ENCODE measurements at regions of chr3 and their contacts with region 1.

Region 1: GRCh38 chr3:145776782-145777408 is 384.1 kb downstream of the PLOD2 start:
- DNase-seq: peak; percentile 54
- ATAC-seq: peak; percentile 56; the same call in 1 of the 2 replicates
- H3K4me3 ChIP-seq: no peak overlapping the region
- H3K27ac ChIP-seq: no peak overlapping the region
- H3K4me1 ChIP-seq: no peaks in the 10 kb centered on the region
- H3K27me3 ChIP-seq: no peaks in the 10 kb centered on the region
- CTCF ChIP-seq: peak; percentile 53
- POLR2A ChIP-seq: no peak
- RAD21 ChIP-seq: peak; percentile 57

Region 2: GRCh38 chr3:146177519-146177918 is 400.6 kb after region 1 on chr3:
- CTCF ChIA-PET with region 1: no interaction called
- POLR2A ChIA-PET with region 1: no interaction called
- dilution Hi-C with region 1: no loop called
- in situ Hi-C with region 1: loop called (anchors 10 kb)
- intact Hi-C with region 1: no loop called
- DNase-seq: no peak
- ATAC-seq: no peak
- H3K4me3 ChIP-seq: no peak overlapping the region
- H3K27ac ChIP-seq: no peak overlapping the region
- H3K4me1 ChIP-seq: no peaks in the 10 kb centered on the region
- H3K27me3 ChIP-seq: no peaks in the 10 kb centered on the region
- CTCF ChIP-seq: no peak
- POLR2A ChIP-seq: no peak
- RAD21 ChIP-seq: no peak

Region 3: DNA sequence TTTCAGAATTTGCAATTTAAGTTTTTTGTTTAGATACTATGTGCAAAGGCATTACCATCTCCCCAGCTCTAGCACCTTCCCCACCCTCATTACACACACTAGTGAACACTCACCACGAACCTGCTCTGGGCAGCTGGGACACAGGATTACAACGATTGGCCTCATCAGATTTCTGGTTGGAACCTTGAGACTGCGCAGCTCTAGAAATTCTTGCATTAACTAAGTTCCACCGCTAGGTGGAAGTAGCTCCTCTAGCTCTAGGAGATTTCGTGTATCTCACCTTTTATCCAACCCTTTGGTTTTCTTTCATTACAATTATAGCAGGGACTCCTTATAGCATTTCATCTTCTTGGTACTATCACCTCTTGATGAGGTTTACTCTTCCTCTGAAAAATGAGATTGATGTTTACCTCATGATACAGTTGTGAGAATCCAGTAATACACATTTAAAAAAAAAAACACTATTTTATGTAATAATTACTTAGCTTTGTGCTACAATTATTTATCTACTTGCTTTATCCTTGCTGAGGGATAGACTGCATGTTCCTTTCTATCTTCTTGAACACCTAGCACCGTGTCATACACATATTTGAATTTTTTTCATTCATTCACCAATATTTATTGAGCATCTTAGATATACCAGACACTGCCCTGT is 412.8 kb after region 1 on chr3:
- CTCF ChIA-PET with region 1: interaction called, 3 read pairs
- POLR2A ChIA-PET with region 1: no interaction called
- dilution Hi-C with region 1: no loop called
- in situ Hi-C with region 1: no loop called
- intact Hi-C with region 1: loop called (anchors 1 kb)
- DNase-seq: peak; percentile 64
- ATAC-seq: peak; percentile 95
- H3K4me3 ChIP-seq: no peak overlapping the region
- H3K27ac ChIP-seq: no peak overlapping the region
- H3K4me1 ChIP-seq: no peaks in the 10 kb centered on the region
- H3K27me3 ChIP-seq: no peaks in the 10 kb centered on the region
- CTCF ChIP-seq: peak; percentile 79
- POLR2A ChIP-seq: no peak
- RAD21 ChIP-seq: peak; percentile 83

Region 4: DNA sequence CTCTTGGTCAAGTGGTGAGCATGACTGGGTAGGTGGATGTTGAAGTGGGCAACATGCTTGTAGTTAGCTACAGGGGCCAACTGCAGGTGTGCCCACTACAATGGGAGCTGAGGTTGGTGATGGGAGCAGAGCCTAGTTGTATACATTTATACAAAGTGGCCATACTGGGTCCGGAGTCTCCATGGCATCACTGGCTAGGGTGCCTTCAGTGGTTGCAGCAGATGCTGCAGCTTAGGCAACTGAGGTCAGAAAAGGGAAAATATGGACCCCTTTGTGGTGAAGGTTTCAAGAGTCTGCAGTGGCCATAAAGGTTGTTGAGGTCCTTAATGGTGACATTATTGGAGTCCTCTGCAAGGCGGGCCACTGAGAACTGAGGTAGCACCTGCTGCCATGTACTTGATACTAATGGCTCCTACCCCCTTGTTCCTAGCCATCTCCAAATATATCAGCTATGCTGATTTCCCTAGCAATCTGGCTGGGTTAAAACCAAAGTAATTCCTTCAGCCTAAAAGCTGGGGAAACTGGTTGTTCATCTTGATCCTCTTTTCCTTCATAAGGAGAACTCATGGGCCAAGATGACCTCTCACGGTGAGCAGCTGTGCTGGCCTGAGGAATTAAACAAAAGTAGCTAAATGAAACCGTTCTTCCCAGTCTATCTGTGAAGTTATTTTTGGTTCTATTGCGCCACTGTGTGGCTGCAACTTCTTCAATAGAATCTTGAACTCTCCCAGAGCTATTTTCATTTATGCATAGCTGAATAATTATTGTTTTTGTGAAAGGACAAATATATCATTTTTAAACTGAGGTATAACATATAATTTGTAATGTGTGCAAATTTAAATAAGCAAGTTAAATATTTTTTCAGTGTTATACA is 550.0 kb after region 1 on chr3:
- CTCF ChIA-PET with region 1: interaction called, 4 read pairs
- POLR2A ChIA-PET with region 1: no interaction called
- dilution Hi-C with region 1: no loop called
- in situ Hi-C with region 1: no loop called
- intact Hi-C with region 1: loop called (anchors 2 kb)
- DNase-seq: peak; percentile 82
- ATAC-seq: peak; percentile 93
- H3K4me3 ChIP-seq: no peak overlapping the region
- H3K27ac ChIP-seq: no peak overlapping the region
- H3K4me1 ChIP-seq: no peaks in the 10 kb centered on the region
- H3K27me3 ChIP-seq: no peaks in the 10 kb centered on the region
- CTCF ChIP-seq: peak; percentile 82
- POLR2A ChIP-seq: no peak
- RAD21 ChIP-seq: peak; percentile 84

Region 5: DNA sequence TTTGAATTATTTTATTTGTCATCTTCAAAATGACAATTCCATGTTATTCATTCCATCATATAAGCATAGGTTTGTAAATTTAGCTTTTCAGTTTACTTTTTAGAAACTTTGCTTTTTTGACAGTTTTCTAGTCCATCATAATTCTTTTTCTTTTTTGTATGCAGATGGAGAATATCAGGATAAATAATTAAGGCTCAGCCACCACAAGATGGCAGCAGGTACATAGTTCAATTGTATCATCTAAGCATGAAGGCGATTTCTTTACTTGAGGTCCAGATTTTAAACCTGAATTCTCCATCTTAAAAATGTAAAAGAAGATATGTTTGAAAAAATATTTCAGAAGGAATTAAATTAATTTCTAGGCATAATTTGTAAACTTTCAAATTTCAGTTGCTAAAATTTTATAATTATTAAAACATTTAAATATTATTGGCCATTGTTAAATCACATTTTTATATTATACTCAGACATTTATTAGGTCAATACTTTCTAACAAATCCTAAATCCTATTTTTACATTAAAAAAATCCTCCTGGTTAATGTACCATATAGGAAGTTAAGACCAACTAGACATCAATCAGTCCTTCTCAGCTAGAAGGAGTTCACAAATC is 813.1 kb after region 1 on chr3:
- CTCF ChIA-PET with region 1: no interaction called
- POLR2A ChIA-PET with region 1: no interaction called
- dilution Hi-C with region 1: no loop called
- in situ Hi-C with region 1: no loop called
- intact Hi-C with region 1: loop called (anchors 10 kb)
- DNase-seq: peak; percentile 52
- ATAC-seq: peak; percentile 71
- H3K4me3 ChIP-seq: no peak overlapping the region
- H3K27ac ChIP-seq: no peak overlapping the region
- H3K4me1 ChIP-seq: no peaks in the 10 kb centered on the region
- H3K27me3 ChIP-seq: no peaks in the 10 kb centered on the region
- CTCF ChIP-seq: peak; percentile 66
- POLR2A ChIP-seq: no peak
- RAD21 ChIP-seq: peak; percentile 52; the same call in 1 of the 2 replicates

Measured in IMR-90 (cell line).